Adrenal gland (tissue), 19 donors: ENCODE measurements at regions of chr20 and their contacts with region 1.

Region 1: DNA sequence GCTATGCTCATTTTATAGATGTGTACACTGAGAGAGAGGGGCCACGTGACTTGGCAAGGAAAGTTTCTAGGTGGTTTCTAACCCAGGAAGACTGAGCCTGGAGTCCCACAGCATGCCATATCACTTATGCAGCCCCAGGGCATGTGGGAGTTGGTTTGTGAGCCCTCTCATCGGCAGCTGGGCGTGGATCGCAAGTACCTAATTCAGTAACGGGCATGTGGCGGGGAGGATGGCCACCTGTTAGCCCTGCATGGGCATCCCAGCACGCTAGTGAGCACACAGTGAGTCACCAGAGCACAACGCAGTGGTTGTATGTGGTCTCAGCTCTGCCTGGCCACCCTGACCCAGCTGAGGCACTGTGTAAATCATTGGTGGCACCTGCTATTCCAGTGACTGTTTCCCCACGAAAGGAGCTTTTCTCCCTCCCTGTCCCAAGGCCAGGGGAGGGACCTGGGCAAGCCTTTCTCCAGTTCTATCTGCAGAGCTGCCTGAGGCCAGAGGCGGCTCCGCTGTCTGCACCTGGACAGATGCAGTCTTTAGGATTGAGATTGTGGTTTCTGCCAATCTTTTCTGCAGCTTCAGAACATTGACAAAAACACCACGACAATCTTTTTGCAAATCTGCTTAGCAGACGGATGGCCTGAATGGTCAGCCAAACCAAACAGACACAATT is 88.2 kb downstream of the NINL start:
- DNase-seq: peak in 4 of 7 donors; percentile 21 to 46 (median 35)
- H3K4me3 ChIP-seq: no peak overlapping the region
- H3K27ac ChIP-seq: no peak overlapping the region
- H3K4me1 ChIP-seq: no peaks in the 10 kb centered on the region
- H3K27me3 ChIP-seq: no peaks in the 10 kb centered on the region
- CTCF ChIP-seq: no peak
- POLR2A ChIP-seq: no peak

Region 2: DNA sequence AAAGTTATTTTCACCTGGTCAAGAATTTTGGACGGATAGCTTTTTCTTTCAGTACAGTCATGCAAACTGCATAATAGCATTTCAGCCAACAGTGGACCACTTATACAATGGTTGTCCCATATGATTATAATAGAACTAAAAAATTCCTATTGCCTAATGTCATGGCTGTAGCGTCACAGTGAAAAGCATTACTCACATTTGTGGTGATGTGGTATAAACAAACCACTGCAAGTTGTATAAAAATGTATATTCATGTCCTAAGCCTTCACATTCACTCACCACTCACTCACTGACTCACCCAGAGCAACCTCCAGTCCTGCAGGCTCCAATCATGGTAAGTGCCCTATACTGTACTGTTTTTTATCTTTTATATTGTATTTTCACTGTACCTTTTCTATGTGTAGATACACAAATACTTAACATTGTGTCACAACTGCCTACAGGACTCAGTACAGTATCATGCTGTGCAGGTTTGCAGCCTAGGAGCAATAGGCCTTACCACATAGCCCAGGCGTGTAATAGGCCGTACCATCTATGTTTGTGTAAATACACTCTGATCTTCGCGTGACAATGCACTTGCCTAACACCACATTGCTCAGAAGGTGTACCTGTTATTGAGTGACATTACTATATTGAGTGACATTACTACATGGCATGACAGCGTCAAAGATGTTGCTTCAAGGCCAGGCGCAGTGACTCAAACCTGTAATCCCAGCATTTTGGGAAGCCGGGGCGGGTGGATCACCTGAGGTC is 124.3 kb before region 1 on chr20:
- intact Hi-C with region 1: no loop called
- DNase-seq: no peak
- H3K4me3 ChIP-seq: no peak overlapping the region
- H3K27ac ChIP-seq: no peak overlapping the region
- H3K4me1 ChIP-seq: no peaks in the 10 kb centered on the region
- H3K27me3 ChIP-seq: no peaks in the 10 kb centered on the region
- CTCF ChIP-seq: no peak
- POLR2A ChIP-seq: no peak

Region 3: DNA sequence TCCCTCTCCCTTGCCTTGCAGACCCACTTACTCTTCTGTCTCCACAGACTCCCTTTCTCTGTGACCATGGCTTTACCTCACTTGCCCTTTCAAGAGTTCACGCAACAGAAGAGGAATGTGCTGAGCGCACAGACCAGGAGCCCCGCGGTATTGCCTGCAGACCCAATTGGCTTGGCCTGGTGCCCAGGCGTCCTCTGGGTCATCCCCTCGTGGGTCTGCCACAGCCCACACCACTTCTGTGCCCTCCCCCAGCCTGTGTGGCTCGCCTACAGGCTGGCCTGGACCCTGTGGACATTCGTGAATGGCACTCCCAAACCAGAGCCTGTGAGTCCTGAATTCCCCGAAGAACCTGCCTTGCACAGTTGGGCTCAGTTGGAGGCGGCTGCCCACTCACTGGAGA is 103.5 kb after region 1 on chr20:
- intact Hi-C with region 1: loop called in 1 of 2 experiments (anchors 10 kb)
- DNase-seq: no peak
- H3K4me3 ChIP-seq: no peak overlapping the region
- H3K27ac ChIP-seq: no peak overlapping the region
- H3K4me1 ChIP-seq: no peaks in the 10 kb centered on the region
- H3K27me3 ChIP-seq: no peaks in the 10 kb centered on the region
- CTCF ChIP-seq: no peak
- POLR2A ChIP-seq: no peak